ENCODE measurements at regions of chr19 and their contacts with region 1.

Region 1: DNA sequence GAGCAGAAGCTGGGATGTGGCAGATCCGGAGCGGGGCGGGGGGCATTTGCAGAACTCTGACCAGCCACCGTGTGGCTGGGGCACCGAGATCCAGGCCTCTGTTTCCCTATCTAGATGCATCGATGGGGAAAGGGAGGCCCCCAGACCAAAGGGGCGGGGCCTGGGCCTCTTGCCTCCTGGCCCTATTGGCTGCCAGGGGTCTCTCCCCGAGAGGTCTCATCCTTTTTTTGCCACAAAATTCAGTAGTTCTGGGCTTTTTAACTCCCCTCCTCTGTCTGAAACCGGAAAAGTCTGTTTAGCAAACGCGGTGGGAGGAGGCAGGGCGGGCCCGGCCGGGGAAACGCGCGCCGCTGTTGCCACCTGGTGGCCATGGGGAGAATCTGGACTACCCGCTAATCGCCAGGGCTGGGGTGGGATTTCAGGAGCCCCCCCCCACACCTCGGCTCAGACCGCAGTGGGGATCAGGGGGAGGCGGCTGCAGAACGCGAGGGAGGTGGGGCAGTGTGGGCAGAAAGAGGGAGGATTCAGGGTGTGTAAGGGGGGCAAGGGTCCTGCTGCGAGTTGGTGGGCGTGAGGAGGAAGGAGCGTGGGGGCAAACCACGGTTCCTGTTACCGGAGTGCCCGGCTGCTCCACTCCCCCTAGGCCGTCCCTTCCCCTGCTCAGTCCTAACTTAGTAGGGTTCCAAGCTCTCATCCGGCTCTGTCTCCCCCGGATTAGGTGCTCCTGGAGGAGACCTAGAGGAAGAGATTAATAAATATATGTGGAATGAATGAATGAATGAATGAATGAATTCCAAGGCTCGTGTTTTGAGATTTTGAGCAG is 28.3 kb downstream of the IL12RB1 start:
- DNase-seq: peak; percentile 84 to 85
- ATAC-seq: peak; percentile 88 to 95 (median 92)
- H3K4me3 ChIP-seq: peak overlapping the region in 7 of 10 donors; percentile 8 to 44 (median 35)
- H3K27ac ChIP-seq: peak overlapping the region; percentile 71 to 93 (median 82)
- H3K4me1 ChIP-seq: peaks cover 6 to 16% (median 11%) of the 10 kb centered on the region in 9 donors
- H3K27me3 ChIP-seq: peaks cover 0 to 2% (median 0%) of the 10 kb centered on the region in 7 donors
- CTCF ChIP-seq: peak; percentile 91 to 98 (median 96)

Region 2: DNA sequence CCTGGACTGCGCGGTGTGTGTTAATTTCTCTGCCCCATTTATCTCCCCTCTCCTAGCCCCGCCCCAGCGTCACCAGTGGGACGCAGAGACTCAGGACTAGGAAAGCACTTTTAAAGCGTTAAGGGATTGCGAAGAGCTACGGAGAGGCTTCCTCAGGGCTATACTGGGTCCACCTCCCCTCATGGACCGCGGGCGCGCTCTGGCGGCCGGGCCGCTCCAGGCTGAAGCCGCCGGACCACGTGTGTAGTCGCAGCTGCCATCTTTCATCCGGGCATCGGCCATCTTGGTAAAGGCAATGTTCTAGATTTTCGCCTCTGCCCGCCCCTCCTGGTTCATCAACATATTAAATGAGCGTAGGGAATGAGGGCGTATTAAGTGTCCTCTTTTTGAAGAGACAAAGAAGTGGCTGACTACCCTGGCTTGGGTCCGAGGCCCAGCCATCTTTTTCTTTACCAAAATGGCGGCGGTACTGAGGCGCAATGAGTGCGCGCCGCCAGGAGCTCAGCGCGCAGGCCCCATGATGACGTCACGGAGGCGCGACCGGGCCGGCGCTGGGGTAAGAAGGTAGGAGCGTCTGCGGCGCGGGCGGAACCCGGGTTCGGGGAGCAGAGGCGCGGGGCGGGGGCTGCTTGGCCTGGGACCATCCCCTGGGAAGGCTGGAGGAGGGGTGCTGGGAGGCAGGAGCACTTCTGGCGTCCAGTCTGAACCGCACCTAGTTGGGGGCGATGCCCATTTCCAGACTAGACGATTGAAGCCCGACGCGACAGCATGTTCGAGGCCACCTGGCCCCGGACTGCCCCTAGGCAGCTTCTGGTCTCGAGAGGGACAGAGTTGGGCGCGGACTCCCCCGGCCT is 125.7 kb before region 1 on chr19 and contains the start of gene CCDC124:
- intact Hi-C with region 1: loop called in 3 of 10 experiments (anchors 5 to 10 kb)
- DNase-seq: peak; percentile 90
- ATAC-seq: peak; percentile 95 to 99 (median 97)
- H3K4me3 ChIP-seq: peak within 1 kb of the TSS; percentile 64 to 98 (median 88)
- H3K27ac ChIP-seq: peak within 1 kb of the TSS in 9 of 10 donors; percentile 74 to 98 (median 85)
- H3K4me1 ChIP-seq: peaks cover 5 to 22% (median 20%) of the 10 kb centered on the region in 9 donors
- H3K27me3 ChIP-seq: no peaks in the 10 kb centered on the region
- CTCF ChIP-seq: peak; percentile 62 to 96 (median 81)
- total RNA-seq, gene CCDC124: 52.0 to 94.2 (median 61.6) TPM

Region 3: GRCh38 chr19:17938092-17938845 is 120.2 kb before region 1 on chr19:
- intact Hi-C with region 1: loop called in 8 of 10 experiments (anchors 5 to 10 kb)
- DNase-seq: peak; percentile 74 to 76
- ATAC-seq: peak; percentile 75 to 88 (median 85)
- H3K4me3 ChIP-seq: no peak overlapping the region
- H3K27ac ChIP-seq: no peak overlapping the region
- H3K4me1 ChIP-seq: peaks cover 5 to 14% (median 9%) of the 10 kb centered on the region in 9 donors
- H3K27me3 ChIP-seq: no peaks in the 10 kb centered on the region
- CTCF ChIP-seq: peak; percentile 82 to 97 (median 94)

Region 4: GRCh38 chr19:17947815-17948513 is 110.5 kb before region 1 on chr19:
- intact Hi-C with region 1: loop called in 5 of 10 experiments (anchors 5 to 10 kb)
- DNase-seq: peak; percentile 90 to 94
- ATAC-seq: peak; percentile 84 to 93 (median 92)
- H3K4me3 ChIP-seq: peak overlapping the region; percentile 62 to 92 (median 74)
- H3K27ac ChIP-seq: peak overlapping the region in 6 of 10 donors; percentile 44 to 82 (median 61)
- H3K4me1 ChIP-seq: peaks cover 29 to 54% (median 48%) of the 10 kb centered on the region in 9 donors
- H3K27me3 ChIP-seq: peaks cover 17 to 50% (median 43%) of the 10 kb centered on the region in 7 donors
- CTCF ChIP-seq: no peak

Region 5: DNA sequence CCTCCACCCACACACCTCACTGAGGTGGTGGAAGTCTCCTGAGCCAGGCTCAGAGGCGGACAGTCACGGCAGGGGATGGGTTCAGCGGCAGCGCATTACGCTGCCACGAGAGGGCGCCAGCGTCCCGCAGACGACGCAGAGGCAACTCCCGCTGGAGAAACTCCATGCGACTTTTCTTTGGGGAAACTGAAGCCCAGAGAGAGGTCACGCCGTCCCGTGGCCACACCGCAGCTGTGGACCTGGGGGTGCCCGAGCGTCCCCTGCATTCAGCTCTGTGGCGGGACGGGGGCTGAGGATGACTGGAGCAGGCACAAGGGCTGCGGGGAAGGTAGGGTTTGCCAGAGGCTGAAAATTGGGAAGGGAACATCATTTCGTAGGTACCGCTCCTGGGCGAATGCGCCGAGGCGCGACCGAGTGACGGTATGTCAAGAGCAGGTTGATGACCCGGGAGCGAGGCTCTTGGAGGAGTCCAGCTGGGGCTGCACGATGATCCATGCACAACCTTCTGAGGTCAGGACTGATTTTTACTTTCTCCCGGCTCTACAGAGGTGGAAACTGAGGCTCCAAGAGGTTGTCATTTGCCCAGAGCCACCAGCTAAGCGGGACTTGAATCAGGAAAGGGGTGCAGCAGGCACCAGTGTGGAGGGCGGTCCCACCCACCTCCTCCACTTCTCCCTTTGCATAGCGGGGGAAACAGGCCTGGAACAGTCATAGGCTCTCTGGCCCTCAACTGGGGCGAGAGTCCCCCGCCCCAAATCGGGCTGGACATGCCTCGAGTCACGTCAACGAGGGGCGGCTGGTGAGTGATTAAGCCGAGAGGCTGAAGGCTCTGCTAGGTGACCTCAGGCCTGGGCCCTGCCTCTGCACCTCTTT is 51.1 kb before region 1 on chr19:
- intact Hi-C with region 1: loop called (anchors 1 to 2 kb)
- DNase-seq: peak; percentile 82 to 88
- ATAC-seq: peak; percentile 81 to 96 (median 90)
- H3K4me3 ChIP-seq: peak overlapping the region; percentile 37 to 77 (median 58)
- H3K27ac ChIP-seq: peak overlapping the region; percentile 70 to 91 (median 88)
- H3K4me1 ChIP-seq: peaks cover 0 to 44% (median 29%) of the 10 kb centered on the region in 9 donors
- H3K27me3 ChIP-seq: no peaks in the 10 kb centered on the region
- CTCF ChIP-seq: peak; percentile 96 to 100 (median 99)